ENCODE measurements at regions of chr22 and their contacts with region 1.

Region 1: GRCh38 chr22:19909350-19910179 is 32.0 kb upstream of the COMT start:
- DNase-seq: peak; percentile 85 to 95 (median 92)
- ATAC-seq: peak; percentile 87 to 91
- H3K4me3 ChIP-seq: no peak overlapping the region
- H3K27ac ChIP-seq: no peak overlapping the region
- H3K4me1 ChIP-seq: no peaks in the 10 kb centered on the region
- H3K27me3 ChIP-seq: no peaks in the 10 kb centered on the region

Region 2: DNA sequence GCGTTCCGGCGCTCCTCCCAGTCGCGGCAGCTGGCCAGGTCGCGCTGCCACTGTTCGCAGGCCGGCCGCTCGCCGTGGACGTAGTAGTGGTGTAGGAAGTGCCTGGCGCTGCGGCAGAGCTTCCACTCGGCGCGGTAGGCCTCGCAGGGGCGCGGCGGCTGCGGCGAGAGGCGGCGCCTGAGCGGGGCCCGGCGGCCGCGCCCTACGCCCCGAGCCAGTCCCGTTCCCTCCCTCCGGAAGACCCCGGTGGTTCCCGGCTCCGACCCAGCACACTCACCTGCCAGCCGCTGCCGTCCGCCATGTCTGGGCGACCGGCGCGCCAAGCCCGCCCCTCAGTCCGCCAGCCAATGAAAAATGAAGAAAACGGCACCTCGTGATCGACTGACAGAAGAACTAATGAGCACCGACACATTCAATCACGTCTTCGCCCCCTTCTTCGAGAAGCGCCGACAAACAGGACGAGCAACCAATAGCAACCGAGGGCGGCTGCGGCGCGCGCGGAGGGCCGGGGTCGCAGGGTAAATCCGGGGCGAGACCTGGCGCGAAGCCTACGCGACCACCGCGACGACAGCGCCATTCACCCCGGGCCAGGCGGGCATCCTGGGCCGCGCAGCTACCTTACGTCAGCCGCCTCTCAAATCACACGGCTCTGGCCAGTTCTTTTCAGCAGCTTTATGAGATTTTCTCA is 462.0 kb before region 1 on chr22 and contains the start of gene C22orf39:
- intact Hi-C with region 1: no loop called
- DNase-seq: peak; percentile 89 to 94 (median 93)
- ATAC-seq: peak; percentile 95 to 96
- H3K4me3 ChIP-seq: peak within 1 kb of the TSS; percentile 82
- H3K27ac ChIP-seq: peak within 1 kb of the TSS; percentile 82
- H3K4me1 ChIP-seq: peaks cover 13% of the 10 kb centered on the region
- H3K27me3 ChIP-seq: no peaks in the 10 kb centered on the region
- total RNA-seq, gene C22orf39: 44.9 to 64.3 (median 58.5) TPM

Region 3: DNA sequence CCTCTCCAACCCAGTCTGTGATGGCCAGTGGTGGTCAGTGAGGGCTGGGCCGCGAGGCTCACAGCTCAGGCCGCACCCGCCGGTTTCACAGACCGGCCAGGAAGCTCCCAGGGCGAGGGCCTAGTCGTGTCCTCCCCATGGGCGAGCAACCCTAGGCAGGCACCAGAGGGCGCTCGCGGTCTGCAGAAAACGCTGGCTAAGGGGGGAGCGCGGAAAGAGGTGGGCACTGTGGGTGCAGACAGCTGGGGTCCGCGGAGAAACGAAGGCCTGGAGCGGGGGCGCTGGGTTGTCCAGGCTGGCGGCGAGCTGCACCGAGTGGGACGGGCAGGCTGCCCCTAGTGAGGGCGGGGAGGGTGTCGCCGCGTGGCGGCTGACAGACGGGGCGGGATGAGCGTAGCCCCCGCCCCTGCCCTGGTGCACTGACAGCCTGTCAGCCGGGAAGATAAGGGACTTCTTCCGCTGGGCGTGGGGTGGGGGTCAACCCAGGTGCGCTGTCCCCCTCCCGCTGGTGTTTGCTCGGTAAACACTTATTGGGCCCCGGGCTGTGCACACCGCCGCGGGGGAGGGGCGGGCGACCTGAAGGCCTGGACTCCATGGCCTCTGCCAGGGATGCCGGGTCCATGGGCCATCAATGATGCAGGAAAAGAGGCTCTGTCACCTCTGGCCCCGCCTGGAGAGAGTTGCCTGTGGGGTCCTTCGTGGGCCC is 178.8 kb before region 1 on chr22:
- intact Hi-C with region 1: loop called (anchors 2 kb)
- DNase-seq: peak; percentile 89 to 96 (median 94)
- ATAC-seq: peak; percentile 86 to 91
- H3K4me3 ChIP-seq: no peak overlapping the region
- H3K27ac ChIP-seq: no peak overlapping the region
- H3K4me1 ChIP-seq: no peaks in the 10 kb centered on the region
- H3K27me3 ChIP-seq: no peaks in the 10 kb centered on the region